Heart right ventricle (tissue), 16 donors: ENCODE measurements at regions of chr4 and their contacts with region 1.

Region 1: GRCh38 chr4:10063544-10064300 is 42.4 kb upstream of the SLC2A9 start:
- DNase-seq: peak; percentile 53 to 66
- ATAC-seq: peak; percentile 87 to 98 (median 97)
- H3K4me3 ChIP-seq: no peak overlapping the region
- H3K27ac ChIP-seq: peak overlapping the region in 6 of 10 donors; percentile 15 to 65 (median 54)
- H3K4me1 ChIP-seq: peaks cover 3 to 13% (median 10%) of the 10 kb centered on the region in 9 donors
- H3K27me3 ChIP-seq: no peaks in the 10 kb centered on the region
- CTCF ChIP-seq: peak; percentile 59 to 89 (median 80)

Region 2: DNA sequence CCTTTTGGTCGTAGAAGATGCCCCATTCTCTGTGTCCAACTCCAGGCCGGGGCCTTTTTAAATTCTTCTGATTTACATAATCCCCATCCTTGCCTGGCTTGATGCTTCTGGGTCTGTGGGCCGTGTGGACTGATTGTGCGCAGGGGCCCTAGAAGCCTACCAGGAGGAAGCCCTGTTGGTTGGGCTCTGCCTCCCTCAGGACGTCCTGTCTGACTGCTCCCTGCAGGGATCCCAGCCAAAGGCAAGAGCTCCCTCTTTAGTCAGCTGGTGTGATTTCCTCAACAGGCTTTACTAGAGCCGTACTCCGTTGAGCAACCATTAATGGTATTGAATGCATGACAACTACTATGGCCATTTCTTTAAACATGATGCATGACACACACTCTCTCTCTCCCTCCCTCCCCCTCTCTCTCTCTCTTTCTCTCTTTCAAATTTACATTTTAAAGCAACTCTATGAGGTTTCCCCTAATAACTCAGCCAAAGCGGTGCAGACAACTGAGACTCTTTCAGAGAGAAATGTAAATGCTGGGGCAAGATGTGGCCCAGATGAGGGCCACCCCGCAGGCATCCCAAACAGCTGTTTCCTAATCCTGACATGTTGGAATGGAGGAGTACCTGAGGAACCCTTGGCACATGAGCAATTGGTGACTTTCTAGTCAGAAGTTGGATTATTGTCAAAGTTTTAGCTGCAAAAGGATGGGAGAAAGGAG is 165.0 kb before region 1 on chr4:
- intact Hi-C with region 1: loop called in 3 of 10 experiments (anchors 2 to 10 kb)
- DNase-seq: peak; percentile 46 to 65
- ATAC-seq: peak; percentile 88 to 95 (median 91)
- H3K4me3 ChIP-seq: no peak overlapping the region
- H3K27ac ChIP-seq: no peak overlapping the region
- H3K4me1 ChIP-seq: peaks cover 0 to 18% (median 5%) of the 10 kb centered on the region in 9 donors
- H3K27me3 ChIP-seq: no peaks in the 10 kb centered on the region
- CTCF ChIP-seq: peak; percentile 23 to 71 (median 58)

Region 3: GRCh38 chr4:10106421-10107039 is 42.8 kb after region 1 on chr4:
- intact Hi-C with region 1: no loop called
- DNase-seq: peak in 1 of 2 donors; percentile 65
- ATAC-seq: peak; percentile 46 to 90 (median 73)
- H3K4me3 ChIP-seq: peak overlapping the region in 2 of 10 donors; percentile 5 to 16
- H3K27ac ChIP-seq: peak overlapping the region in 9 of 10 donors; percentile 50 to 83 (median 77)
- H3K4me1 ChIP-seq: peaks cover 39 to 98% (median 93%) of the 10 kb centered on the region in 9 donors
- H3K27me3 ChIP-seq: no peaks in the 10 kb centered on the region
- CTCF ChIP-seq: no peak

Region 4: GRCh38 chr4:10123227-10124101 is 59.7 kb after region 1 on chr4:
- intact Hi-C with region 1: no loop called
- DNase-seq: no peak
- ATAC-seq: peak in 7 of 8 donors; percentile 24 to 75 (median 49)
- H3K4me3 ChIP-seq: no peak overlapping the region
- H3K27ac ChIP-seq: peak overlapping the region in 7 of 10 donors; percentile 12 to 73 (median 53)
- H3K4me1 ChIP-seq: peaks cover 0 to 23% (median 14%) of the 10 kb centered on the region in 9 donors
- H3K27me3 ChIP-seq: no peaks in the 10 kb centered on the region
- CTCF ChIP-seq: no peak

Region 5: GRCh38 chr4:10305816-10306215 is 242.1 kb after region 1 on chr4:
- intact Hi-C with region 1: no loop called
- DNase-seq: no peak
- ATAC-seq: peak in 1 of 8 donors; percentile 14
- H3K4me3 ChIP-seq: no peak overlapping the region
- H3K27ac ChIP-seq: no peak overlapping the region
- H3K4me1 ChIP-seq: no peaks in the 10 kb centered on the region
- H3K27me3 ChIP-seq: peaks cover 0 to 9% (median 0%) of the 10 kb centered on the region in 7 donors
- CTCF ChIP-seq: no peak

Region 6: DNA sequence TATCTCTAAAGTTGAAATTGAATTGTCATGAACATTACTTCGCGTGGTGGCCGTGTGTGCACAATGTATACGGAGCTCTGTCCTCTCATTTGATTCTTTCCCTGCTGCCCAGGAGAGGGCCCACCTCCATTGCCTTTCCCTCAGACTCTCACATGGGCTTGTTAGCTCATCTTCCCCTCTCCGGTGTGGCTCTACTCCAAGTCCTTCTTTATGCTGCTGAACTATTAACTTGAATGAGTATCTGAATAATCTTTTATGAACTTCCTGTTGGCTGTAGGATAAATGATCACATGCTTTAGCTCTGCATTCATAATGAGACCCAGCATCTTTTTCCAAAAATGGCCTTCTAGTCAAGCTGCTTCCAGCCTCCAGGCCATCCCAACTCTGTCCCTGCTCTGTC is 689.6 kb after region 1 on chr4:
- intact Hi-C with region 1: no loop called
- DNase-seq: no peak
- ATAC-seq: no peak
- H3K4me3 ChIP-seq: no peak overlapping the region
- H3K27ac ChIP-seq: no peak overlapping the region
- H3K4me1 ChIP-seq: no peaks in the 10 kb centered on the region
- H3K27me3 ChIP-seq: no peaks in the 10 kb centered on the region
- CTCF ChIP-seq: no peak